B cell (primary cell): ENCODE measurements at regions of chr17 and their contacts with region 1.

Region 1: DNA sequence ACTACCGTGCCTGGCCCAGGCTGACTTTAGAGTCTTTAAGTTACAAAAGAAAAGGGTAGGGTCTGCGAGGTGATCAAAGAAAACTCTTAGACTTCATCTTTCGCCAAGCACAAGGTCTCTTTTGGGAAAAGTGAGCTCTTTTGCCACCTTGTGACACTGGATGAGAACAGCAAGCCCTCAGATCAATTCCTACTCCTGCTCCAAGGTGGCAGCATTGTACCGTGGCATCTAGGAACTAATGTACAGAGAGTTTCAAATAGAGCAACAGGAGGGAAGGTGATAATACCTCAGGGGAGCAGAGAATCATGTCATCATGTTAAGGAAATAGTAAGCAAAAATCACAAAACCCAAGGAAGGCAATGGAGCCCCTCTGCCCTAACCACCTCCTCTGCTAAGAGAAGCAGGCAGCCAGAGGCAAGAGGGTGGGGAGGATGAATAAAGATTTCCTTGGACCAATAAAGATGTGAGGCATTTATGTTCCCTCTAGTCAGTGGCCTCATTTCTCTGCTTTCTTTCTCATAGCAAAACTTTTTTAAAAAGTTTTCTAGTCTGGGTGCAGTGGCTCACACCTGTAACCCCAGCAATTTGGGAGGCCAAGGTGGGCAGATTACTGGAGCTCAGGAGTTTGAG is 2.1 kb upstream of the C17orf78 start:
- DNase-seq: peak; percentile 73
- ATAC-seq: peak; percentile 85
- H3K4me3 ChIP-seq: no peak overlapping the region
- H3K4me3 Mint-ChIP-seq: no peak overlapping the region
- H3K27ac ChIP-seq: no peak overlapping the region
- H3K27ac Mint-ChIP-seq: no peak overlapping the region
- H3K4me1 ChIP-seq: no peaks in the 10 kb centered on the region
- H3K4me1 Mint-ChIP-seq: peaks cover 3% of the 10 kb centered on the region
- H3K27me3 ChIP-seq: no peaks in the 10 kb centered on the region
- H3K27me3 Mint-ChIP-seq: no peaks in the 10 kb centered on the region
- CTCF ChIP-seq: peak; percentile 83

Region 2: DNA sequence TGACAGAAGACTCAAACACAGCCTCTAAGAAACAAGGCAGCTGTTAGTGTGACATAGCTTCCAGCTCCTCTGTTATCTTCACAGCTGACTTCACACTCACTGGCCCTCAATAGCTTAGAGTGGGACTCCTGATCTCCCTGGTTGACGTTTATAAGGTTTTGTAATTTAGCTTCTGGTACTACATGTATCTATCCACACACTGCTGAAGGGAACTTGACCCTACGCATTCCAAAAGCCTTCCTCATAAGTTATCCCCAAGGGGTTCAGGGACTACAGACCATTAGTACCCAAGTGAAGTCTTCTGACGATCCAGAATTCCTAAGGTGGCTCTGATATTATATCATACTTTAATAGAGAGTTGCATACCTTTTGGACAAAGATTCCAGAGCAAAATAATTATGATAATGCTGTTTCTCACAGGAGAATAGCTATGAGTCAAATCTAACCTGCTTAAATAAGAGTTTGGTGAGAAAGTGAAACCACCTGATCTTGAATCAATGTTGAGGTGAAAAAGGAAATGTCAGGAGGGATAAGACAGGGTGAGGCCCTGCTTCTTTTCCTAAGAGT is 18.5 kb after region 1 on chr17:
- CTCF ChIA-PET with region 1: interaction called, 61 read pairs
- POLR2A ChIA-PET with region 1: no interaction called
- intact Hi-C with region 1: loop called (anchors 1 kb)
- DNase-seq: no peak
- ATAC-seq: no peak
- H3K4me3 ChIP-seq: no peak overlapping the region
- H3K4me3 Mint-ChIP-seq: no peak overlapping the region
- H3K27ac ChIP-seq: no peak overlapping the region
- H3K27ac Mint-ChIP-seq: no peak overlapping the region
- H3K4me1 ChIP-seq: no peaks in the 10 kb centered on the region
- H3K4me1 Mint-ChIP-seq: peaks cover 9% of the 10 kb centered on the region
- H3K27me3 ChIP-seq: no peaks in the 10 kb centered on the region
- H3K27me3 Mint-ChIP-seq: no peaks in the 10 kb centered on the region
- CTCF ChIP-seq: no peak